GM12878 (cell line): ENCODE measurements at regions of chr5 and their contacts with region 1.

Region 1: GRCh38 chr5:139301808-139302499 is 8.4 kb downstream of the MATR3 start:
- DNase-seq: no peak
- ATAC-seq: peak; percentile 2
- H3K4me3 ChIP-seq: no peak overlapping the region
- H3K27ac ChIP-seq: no peak overlapping the region
- H3K4me1 ChIP-seq: peaks cover 37% of the 10 kb centered on the region
- H3K27me3 ChIP-seq: no peaks in the 10 kb centered on the region
- CTCF ChIP-seq: no peak
- EP300 ChIP-seq: no peak
- POLR2A ChIP-seq: no peak
- RAD21 ChIP-seq: no peak

Region 2: GRCh38 chr5:139312075-139312474 is 10.1 kb after region 1 on chr5:
- CTCF ChIA-PET with region 1: interaction called, 31 read pairs
- POLR2A ChIA-PET with region 1: interaction called, 3 read pairs
- RAD21 ChIA-PET with region 1: interaction called, 3 read pairs
- SMC1A ChIA-PET with region 1: interaction called, 54 read pairs
- in situ Hi-C with region 1: no loop called
- intact Hi-C with region 1: no loop called
- DNase-seq: no peak
- ATAC-seq: no peak
- H3K4me3 ChIP-seq: no peak overlapping the region
- H3K27ac ChIP-seq: no peak overlapping the region
- H3K4me1 ChIP-seq: no peaks in the 10 kb centered on the region
- H3K27me3 ChIP-seq: no peaks in the 10 kb centered on the region
- CTCF ChIP-seq: no peak
- EP300 ChIP-seq: no peak
- POLR2A ChIP-seq: no peak
- RAD21 ChIP-seq: no peak

Region 3: DNA sequence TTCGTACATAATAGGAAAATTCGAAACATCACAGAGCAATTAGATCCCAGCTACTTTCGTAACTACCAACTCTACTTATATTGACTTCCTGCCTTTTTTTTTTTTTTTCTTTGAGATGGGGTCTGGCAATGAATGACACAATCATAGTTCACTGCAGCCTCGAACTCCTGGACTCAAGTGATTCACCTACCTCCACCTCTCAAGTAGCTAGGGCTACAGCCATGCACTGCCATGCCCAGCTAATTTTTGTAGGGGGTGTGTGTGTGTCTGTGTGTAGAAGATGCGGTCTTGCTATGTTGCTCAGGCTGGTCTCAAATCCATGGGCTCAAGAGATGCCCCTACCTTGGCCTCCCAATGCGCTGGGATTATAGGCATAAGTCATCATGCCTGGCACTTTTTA is 33.9 kb after region 1 on chr5:
- CTCF ChIA-PET with region 1: interaction called, 3 read pairs
- POLR2A ChIA-PET with region 1: interaction called, 4 read pairs
- RAD21 ChIA-PET with region 1: interaction called, 4 read pairs
- SMC1A ChIA-PET with region 1: interaction called, 10 read pairs
- in situ Hi-C with region 1: no loop called
- intact Hi-C with region 1: no loop called
- DNase-seq: no peak
- ATAC-seq: 0 out of 3 replicates have a peak, but pooled peaks have one; percentile 10
- H3K4me3 ChIP-seq: no peak overlapping the region
- H3K27ac ChIP-seq: no peak overlapping the region
- H3K4me1 ChIP-seq: peaks cover 4% of the 10 kb centered on the region
- H3K27me3 ChIP-seq: no peaks in the 10 kb centered on the region
- CTCF ChIP-seq: no peak
- EP300 ChIP-seq: no peak
- POLR2A ChIP-seq: no peak
- RAD21 ChIP-seq: no peak

Region 4: GRCh38 chr5:139341650-139342422 is 39.9 kb after region 1 on chr5 and contains the start of gene PAIP2:
- CTCF ChIA-PET with region 1: interaction called, 6 read pairs
- POLR2A ChIA-PET with region 1: interaction called, 9 read pairs
- RAD21 ChIA-PET with region 1: interaction called, 6 read pairs
- SMC1A ChIA-PET with region 1: interaction called, 14 read pairs
- in situ Hi-C with region 1: no loop called
- intact Hi-C with region 1: no loop called
- DNase-seq: peak; percentile 90
- ATAC-seq: peak; percentile 89
- H3K4me3 ChIP-seq: peak within 1 kb of the TSS; percentile 93
- H3K27ac ChIP-seq: peak within 1 kb of the TSS; percentile 92
- H3K4me1 ChIP-seq: peaks cover 11% of the 10 kb centered on the region
- H3K27me3 ChIP-seq: no peaks in the 10 kb centered on the region
- CTCF ChIP-seq: peak; percentile 90 to 96 (median 90)
- EP300 ChIP-seq: peak in 1 of 2 experiments; percentile 30; a peak in 1 of 4 replicates
- POLR2A ChIP-seq: peak; percentile 97
- RAD21 ChIP-seq: peak; percentile 58
- polyA plus RNA-seq, gene PAIP2: 100 to 113 TPM

Region 5: DNA sequence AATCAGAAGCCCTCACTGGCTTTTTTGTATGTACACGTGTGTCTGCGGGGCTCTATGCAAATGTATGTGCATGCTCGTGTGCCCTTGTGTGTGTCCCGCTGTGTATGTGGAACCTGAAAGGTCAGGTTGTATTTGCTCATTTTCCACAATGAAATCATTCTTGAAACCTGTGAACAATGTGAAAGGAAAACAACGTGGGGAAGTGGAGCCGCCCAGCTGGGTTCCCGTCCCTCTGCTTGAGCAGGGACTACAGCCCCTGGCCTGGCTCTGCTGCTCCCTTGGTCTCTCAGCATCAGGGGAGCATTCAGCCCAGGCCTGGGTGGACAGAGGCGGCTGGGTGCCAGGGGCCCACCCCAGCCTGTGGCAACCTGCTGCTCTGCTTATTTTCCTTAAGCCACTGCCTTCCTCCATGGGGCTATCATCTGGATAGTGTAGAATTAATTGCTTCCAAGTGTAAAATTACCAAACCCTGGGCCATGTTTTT is 157.5 kb after region 1 on chr5:
- CTCF ChIA-PET with region 1: no interaction called
- POLR2A ChIA-PET with region 1: no interaction called
- RAD21 ChIA-PET with region 1: no interaction called
- SMC1A ChIA-PET with region 1: no interaction called
- in situ Hi-C with region 1: no loop called
- intact Hi-C with region 1: no loop called
- DNase-seq: peak; percentile 64
- ATAC-seq: peak; percentile 66
- H3K4me3 ChIP-seq: 0 out of 2 replicates have a peak overlapping the region, but pooled peaks have one; percentile 28
- H3K27ac ChIP-seq: peak overlapping the region; percentile 93
- H3K4me1 ChIP-seq: peaks cover 39% of the 10 kb centered on the region
- H3K27me3 ChIP-seq: no peaks in the 10 kb centered on the region
- CTCF ChIP-seq: no peak
- EP300 ChIP-seq: no peak
- POLR2A ChIP-seq: no peak
- RAD21 ChIP-seq: no peak